CD4-positive, alpha-beta memory T cell (primary cell): ENCODE measurements at regions of chr1 and their contacts with region 1.

Region 1: GRCh38 chr1:160567858-160568682 is 11.2 kb downstream of the CD84 start:
- DNase-seq: peak; percentile 73 to 89 (median 75)
- H3K4me3 ChIP-seq: peak overlapping the region in 1 of 2 donors; percentile 18
- H3K4me3 Mint-ChIP-seq: peak overlapping the region; percentile 47 to 83 (median 69)
- H3K27ac ChIP-seq: peak overlapping the region; percentile 51
- H3K27ac Mint-ChIP-seq: peak overlapping the region; percentile 86 to 97 (median 93)
- H3K4me1 ChIP-seq: peaks cover 96% of the 10 kb centered on the region
- H3K4me1 Mint-ChIP-seq: peaks cover 82 to 98% (median 85%) of the 10 kb centered on the region in 4 donors
- H3K27me3 ChIP-seq: no peaks in the 10 kb centered on the region
- H3K27me3 Mint-ChIP-seq: no peaks in the 10 kb centered on the region

Region 2: GRCh38 chr1:160550572-160551034 is 17.5 kb before region 1 on chr1:
- CTCF ChIA-PET with region 1: interaction called, 7 read pairs
- POLR2A ChIA-PET with region 1: interaction called, 639 read pairs
- intact Hi-C with region 1: no loop called
- DNase-seq: peak in 4 of 5 donors; percentile 43 to 54 (median 46)
- H3K4me3 ChIP-seq: no peak overlapping the region
- H3K4me3 Mint-ChIP-seq: peak overlapping the region in 1 of 8 donors; percentile 36
- H3K27ac ChIP-seq: no peak overlapping the region
- H3K27ac Mint-ChIP-seq: peak overlapping the region in 5 of 7 donors; percentile 27 to 77 (median 64)
- H3K4me1 ChIP-seq: peaks cover 36% of the 10 kb centered on the region
- H3K4me1 Mint-ChIP-seq: peaks cover 16 to 40% (median 27%) of the 10 kb centered on the region in 4 donors
- H3K27me3 ChIP-seq: no peaks in the 10 kb centered on the region
- H3K27me3 Mint-ChIP-seq: no peaks in the 10 kb centered on the region

Region 3: GRCh38 chr1:160584784-160585183 is 16.7 kb after region 1 on chr1:
- CTCF ChIA-PET with region 1: interaction called, 4 read pairs
- POLR2A ChIA-PET with region 1: interaction called, 639 read pairs
- intact Hi-C with region 1: loop called (anchors 1 kb)
- DNase-seq: no peak
- H3K4me3 ChIP-seq: no peak overlapping the region
- H3K4me3 Mint-ChIP-seq: peak overlapping the region in 7 of 8 donors; percentile 39 to 79 (median 60)
- H3K27ac ChIP-seq: no peak overlapping the region
- H3K27ac Mint-ChIP-seq: peak overlapping the region in 4 of 7 donors; percentile 72 to 89 (median 80)
- H3K4me1 ChIP-seq: peaks cover 37% of the 10 kb centered on the region
- H3K4me1 Mint-ChIP-seq: peaks cover 46 to 76% (median 53%) of the 10 kb centered on the region in 4 donors
- H3K27me3 ChIP-seq: no peaks in the 10 kb centered on the region
- H3K27me3 Mint-ChIP-seq: no peaks in the 10 kb centered on the region